Calu3 (cell line): ENCODE measurements at regions of chr6 and their contacts with region 1.

Region 1: GRCh38 chr6:7389451-7390225 is at the starts of genes CAGE1 and RIOK1:
- DNase-seq: peak; percentile 92
- H3K4me3 Mint-ChIP-seq: peak within 1 kb of the TSS; percentile 77
- H3K27ac Mint-ChIP-seq: peak within 1 kb of the TSS; percentile 28
- H3K4me1 Mint-ChIP-seq: peaks cover 33% of the 10 kb centered on the region
- H3K27me3 Mint-ChIP-seq: no peaks in the 10 kb centered on the region
- CTCF ChIP-seq: no peak
- total RNA-seq, gene CAGE1: not detected in 2 replicates
- total RNA-seq, gene RIOK1: 13.3 and 16.1 TPM in 2 replicates

Region 2: DNA sequence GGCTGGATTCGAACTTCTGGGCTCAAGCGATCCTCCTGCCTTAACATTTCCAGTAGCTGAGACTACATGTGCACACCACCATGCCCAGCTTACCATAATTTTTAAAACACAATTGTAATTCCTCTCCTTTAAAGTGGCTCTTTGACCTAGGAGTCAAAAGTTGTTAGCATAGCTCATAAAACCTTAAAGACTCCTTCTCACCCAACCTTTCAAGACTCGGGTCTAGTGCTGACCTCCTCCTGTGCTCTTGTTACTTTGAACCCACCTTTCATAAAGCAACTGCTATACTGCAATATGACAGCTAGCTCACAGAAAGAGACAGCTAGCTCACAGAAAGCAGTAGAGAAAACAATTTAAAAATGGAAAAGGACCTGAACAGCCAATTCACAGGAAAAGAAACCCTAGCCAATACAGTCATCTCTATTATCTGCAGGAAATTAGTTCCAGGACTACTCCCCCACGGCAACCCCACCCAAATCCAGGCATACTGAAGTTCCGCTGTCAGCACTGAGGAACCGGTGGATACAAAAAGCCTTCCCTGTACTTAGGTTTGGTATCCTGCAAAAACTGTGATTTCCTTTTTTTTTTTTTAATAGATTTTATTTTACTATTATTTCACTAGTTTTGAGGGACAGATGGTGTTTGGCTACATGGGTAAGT is 96.9 kb before region 1 on chr6:
- CTCF ChIA-PET with region 1: no interaction called
- intact Hi-C with region 1: loop called (anchors 10 kb)
- DNase-seq: no peak
- H3K4me3 Mint-ChIP-seq: no peak overlapping the region
- H3K27ac Mint-ChIP-seq: no peak overlapping the region
- H3K4me1 Mint-ChIP-seq: no peaks in the 10 kb centered on the region
- H3K27me3 Mint-ChIP-seq: no peaks in the 10 kb centered on the region
- CTCF ChIP-seq: no peak

Region 3: GRCh38 chr6:7550433-7550801 is 160.8 kb after region 1 on chr6:
- CTCF ChIA-PET with region 1: no interaction called
- intact Hi-C with region 1: no loop called
- DNase-seq: no peak
- H3K4me3 Mint-ChIP-seq: no peak overlapping the region
- H3K27ac Mint-ChIP-seq: no peak overlapping the region
- H3K4me1 Mint-ChIP-seq: peaks cover 19% of the 10 kb centered on the region
- H3K27me3 Mint-ChIP-seq: no peaks in the 10 kb centered on the region
- CTCF ChIP-seq: no peak

Region 4: DNA sequence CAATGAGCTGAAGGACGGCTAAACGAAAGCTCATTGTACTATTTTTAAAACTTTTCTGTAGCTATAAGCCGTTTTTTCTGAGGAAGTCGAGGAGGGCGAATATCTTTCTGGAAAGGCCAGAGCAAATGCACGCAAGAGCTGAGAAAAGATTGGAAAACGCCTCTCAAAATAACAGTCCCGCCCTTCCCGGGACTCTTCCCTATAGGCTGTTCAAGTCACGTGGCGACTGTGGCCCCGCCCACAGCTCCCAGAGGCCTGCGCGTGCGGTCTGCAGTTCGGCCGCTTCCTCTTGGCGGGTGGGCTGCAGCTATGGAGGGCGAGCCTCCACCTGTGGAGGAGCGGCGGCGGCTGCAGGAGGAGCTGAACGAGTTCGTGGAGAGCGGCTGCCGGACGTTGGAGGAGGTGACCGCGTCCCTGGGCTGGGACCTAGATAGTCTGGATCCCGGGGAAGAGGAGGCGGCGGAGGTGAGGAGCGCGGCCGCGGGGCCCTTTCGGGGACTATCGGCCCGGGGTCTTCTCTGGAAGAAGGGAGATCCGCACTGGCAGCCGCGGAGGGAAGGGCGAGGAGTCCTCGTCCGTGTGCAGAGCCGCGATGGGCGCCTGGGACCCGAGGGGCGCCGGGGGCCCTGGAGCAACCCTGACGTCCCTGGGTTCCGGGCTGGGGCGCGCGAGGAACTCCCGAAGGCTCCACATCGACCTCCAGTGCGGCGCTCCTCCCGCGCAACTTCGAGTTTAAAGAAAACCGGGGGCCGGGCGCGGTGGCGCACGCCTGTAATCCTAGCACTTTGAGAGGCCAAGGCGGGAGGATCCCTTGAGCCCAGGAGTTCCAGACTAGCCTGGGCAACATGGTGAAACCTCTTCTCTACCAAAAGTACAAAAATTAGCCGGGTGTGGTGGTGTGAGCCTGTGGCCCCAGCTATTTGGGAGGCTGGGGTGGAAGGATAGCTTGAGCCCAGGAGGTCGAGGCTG is 200.6 kb after region 1 on chr6 and contains the start of gene SNRNP48:
- CTCF ChIA-PET with region 1: no interaction called
- intact Hi-C with region 1: loop called (anchors 10 kb)
- DNase-seq: peak; percentile 89
- H3K4me3 Mint-ChIP-seq: peak within 1 kb of the TSS; percentile 98
- H3K27ac Mint-ChIP-seq: peak within 1 kb of the TSS; percentile 84
- H3K4me1 Mint-ChIP-seq: peaks cover 52% of the 10 kb centered on the region
- H3K27me3 Mint-ChIP-seq: no peaks in the 10 kb centered on the region
- CTCF ChIP-seq: no peak
- total RNA-seq, gene SNRNP48: 11.7 and 16.1 TPM in 2 replicates